ENCODE measurements at regions of chr17 and their contacts with region 1.

Region 1: GRCh38 chr17:40098846-40099618 is 1.4 kb downstream of the NR1D1 start:
- DNase-seq: peak; percentile 100
- H3K27ac ChIP-seq: peak overlapping the region; percentile 98
- CTCF ChIP-seq: no peak

Region 2: DNA sequence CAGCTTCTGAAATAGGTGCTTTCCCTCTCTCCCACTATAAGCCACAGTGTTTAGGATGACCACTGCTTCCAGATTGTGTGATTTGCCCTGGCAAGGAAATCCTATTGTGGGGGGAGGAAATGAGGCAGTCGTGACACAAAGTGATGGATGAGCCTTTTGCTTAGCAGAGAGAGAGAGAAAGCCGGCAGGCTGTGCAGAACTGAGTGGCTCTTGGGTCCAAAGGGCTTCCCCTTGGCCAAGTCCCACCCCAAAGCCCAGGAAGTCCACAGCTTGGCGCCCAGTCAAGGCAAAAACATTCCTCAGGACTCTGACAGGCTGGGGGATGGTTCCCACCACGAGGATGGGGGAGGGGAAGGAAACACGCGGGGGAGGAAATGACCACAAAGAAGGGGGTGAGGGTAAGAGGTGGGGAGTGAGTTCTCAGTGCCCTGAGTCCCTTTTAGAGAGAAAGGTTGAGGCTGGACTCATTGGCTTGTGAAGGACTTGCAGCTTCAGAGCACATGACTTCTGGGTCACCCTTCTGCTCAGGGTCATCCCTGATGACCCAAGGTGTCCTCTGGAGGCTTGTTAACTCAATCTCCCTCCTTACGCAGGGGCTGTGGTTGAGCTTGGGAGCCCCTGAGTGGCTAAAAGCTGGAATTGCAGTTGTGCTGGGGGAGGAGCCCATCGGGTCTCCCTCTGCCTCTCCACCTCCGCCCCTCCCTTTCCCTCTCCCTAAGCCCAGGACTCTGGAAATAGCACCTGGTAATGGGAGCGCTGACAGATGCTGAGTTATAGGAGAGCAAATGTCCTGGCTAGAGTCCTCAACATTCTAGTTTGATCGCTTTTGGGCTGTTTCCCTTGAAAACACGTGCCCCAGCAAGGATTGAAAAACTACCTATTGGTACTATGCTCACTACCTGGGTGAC is 12.4 kb after region 1 on chr17:
- CTCF ChIA-PET with region 1: interaction called, 11 read pairs
- POLR2A ChIA-PET with region 1: interaction called, 6 read pairs
- DNase-seq: peak; percentile 95
- H3K27ac ChIP-seq: peak overlapping the region; percentile 91
- CTCF ChIP-seq: peak; percentile 86

Region 3: DNA sequence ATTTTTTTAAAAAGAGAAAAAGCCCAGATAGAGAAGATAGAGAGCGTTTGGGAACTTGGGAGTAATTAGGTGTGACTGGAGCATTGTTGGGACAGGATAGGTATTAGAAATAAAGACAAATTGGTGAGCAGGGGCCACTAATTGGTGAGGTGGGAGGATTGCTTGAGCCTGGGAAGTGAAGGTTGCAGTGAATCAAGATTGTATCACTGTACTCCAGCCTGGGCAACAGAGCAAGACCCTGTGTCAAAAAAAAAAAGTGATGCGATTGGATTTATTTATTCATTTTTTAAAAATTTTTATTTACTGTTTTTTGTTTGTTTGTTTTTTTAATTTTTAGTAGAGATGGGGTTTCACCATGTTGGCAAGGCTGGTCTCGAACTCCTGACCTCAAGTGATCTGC is 46.4 kb after region 1 on chr17:
- CTCF ChIA-PET with region 1: no interaction called
- POLR2A ChIA-PET with region 1: no interaction called
- DNase-seq: no peak
- H3K27ac ChIP-seq: no peak overlapping the region
- CTCF ChIP-seq: no peak

Measured in RWPE1 (cell line).